WTC11 (cell line): ENCODE measurements at regions of chr7 and their contacts with region 1.

Region 1: GRCh38 chr7:5083311-5083711 is 37.7 kb downstream of the RBAK start:
- DNase-seq: no peak
- ATAC-seq: no peak
- H3K4me3 Mint-ChIP-seq: no peak overlapping the region
- H3K27ac Mint-ChIP-seq: no peak overlapping the region
- H3K4me1 Mint-ChIP-seq: no peaks in the 10 kb centered on the region
- H3K27me3 Mint-ChIP-seq: peaks cover 22% of the 10 kb centered on the region
- CTCF ChIP-seq: no peak

Region 2: GRCh38 chr7:4916115-4916514 is 167.2 kb before region 1 on chr7:
- CTCF ChIA-PET with region 1: interaction called, 11 read pairs
- POLR2A ChIA-PET with region 1: no interaction called
- DNase-seq: no peak
- ATAC-seq: peak; percentile 47
- H3K4me3 Mint-ChIP-seq: no peak overlapping the region
- H3K27ac Mint-ChIP-seq: no peak overlapping the region
- H3K4me1 Mint-ChIP-seq: no peaks in the 10 kb centered on the region
- H3K27me3 Mint-ChIP-seq: no peaks in the 10 kb centered on the region
- CTCF ChIP-seq: no peak

Region 3: GRCh38 chr7:4931943-4932342 is 151.4 kb before region 1 on chr7:
- CTCF ChIA-PET with region 1: no interaction called
- POLR2A ChIA-PET with region 1: no interaction called
- DNase-seq: peak; percentile 56
- ATAC-seq: peak; percentile 87
- H3K4me3 Mint-ChIP-seq: no peak overlapping the region
- H3K27ac Mint-ChIP-seq: no peak overlapping the region
- H3K4me1 Mint-ChIP-seq: no peaks in the 10 kb centered on the region
- H3K27me3 Mint-ChIP-seq: no peaks in the 10 kb centered on the region
- CTCF ChIP-seq: no peak